Activated CD8-positive, alpha-beta T cell treated with anti-CD3 and anti-CD28 coated beads for 36 hours (primary cell): ENCODE measurements at regions of chr1 and their contacts with region 1.

Region 1: DNA sequence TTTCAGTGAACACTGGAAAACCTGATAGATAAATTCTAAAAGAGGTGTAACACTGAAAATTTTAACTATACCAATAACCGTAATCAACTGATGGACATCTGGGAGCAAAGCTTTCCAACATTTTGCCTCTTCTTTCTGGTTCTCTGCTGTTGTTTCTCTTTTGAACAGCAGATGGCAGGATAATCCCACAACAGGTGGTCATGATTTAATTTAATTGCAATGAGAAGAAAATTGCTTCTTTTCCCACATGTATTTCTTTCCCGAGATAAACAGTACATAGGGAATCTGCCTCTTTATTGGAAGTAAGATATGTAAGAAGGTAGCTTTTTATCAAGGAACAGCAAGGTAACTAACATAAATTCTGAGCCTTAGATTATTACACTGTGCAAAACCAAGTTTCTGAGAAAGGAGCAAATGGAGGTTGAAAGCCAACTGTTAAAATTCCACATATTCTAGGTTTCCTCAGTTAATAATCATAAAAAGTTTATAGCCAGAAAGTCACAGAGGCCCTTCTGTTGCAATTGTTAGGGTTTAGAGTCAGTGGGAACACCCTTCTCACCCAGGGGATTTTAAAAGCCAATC is 72.9 kb downstream of the RPS6KA1 start:
- DNase-seq: peak; percentile 52
- ATAC-seq: peak; percentile 71
- H3K4me3 Mint-ChIP-seq: no peak overlapping the region
- H3K27ac Mint-ChIP-seq: no peak overlapping the region
- H3K4me1 Mint-ChIP-seq: peaks cover 17% of the 10 kb centered on the region
- H3K27me3 Mint-ChIP-seq: no peaks in the 10 kb centered on the region
- CTCF ChIP-seq: peak; percentile 100

Region 2: DNA sequence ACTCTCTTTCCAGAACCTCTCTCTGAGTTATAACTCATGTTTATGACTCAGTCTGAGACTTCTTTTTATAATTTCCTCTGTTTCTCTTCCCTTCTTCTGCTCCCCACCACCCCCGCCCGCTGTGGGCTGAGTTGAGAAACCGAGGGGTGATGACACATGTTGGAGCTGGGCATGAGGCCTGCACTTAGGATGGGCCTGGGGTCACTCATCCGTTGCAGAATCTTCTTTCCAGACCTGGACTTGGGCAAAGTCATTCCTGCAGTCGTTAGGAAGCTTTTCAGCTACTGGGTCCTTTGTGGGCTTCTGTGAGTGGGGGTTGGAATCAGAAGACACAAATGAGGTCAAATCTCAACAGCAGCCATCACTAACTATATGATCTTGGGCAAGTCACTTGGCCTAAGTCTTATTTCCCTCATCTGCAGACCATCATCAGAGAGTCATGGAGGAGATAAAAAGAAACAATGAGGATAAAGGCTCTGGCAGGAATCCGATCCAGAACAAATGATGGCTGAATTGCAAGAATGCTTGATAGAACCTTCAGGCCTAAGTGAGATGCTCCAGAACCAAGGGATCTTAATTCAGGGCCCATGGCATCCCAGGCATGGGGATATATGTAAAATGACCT is 19.5 kb before region 1 on chr1:
- CTCF ChIA-PET with region 1: interaction called, 35 read pairs
- POLR2A ChIA-PET with region 1: no interaction called
- intact Hi-C with region 1: no loop called
- DNase-seq: peak; percentile 94
- ATAC-seq: peak; percentile 55
- H3K4me3 Mint-ChIP-seq: peak overlapping the region; percentile 9
- H3K27ac Mint-ChIP-seq: peak overlapping the region; percentile 97
- H3K4me1 Mint-ChIP-seq: peaks cover 56% of the 10 kb centered on the region
- H3K27me3 Mint-ChIP-seq: no peaks in the 10 kb centered on the region
- CTCF ChIP-seq: no peak

Region 3: GRCh38 chr1:26705788-26706311 is 103.4 kb after region 1 on chr1:
- CTCF ChIA-PET with region 1: interaction called, 36 read pairs
- POLR2A ChIA-PET with region 1: no interaction called
- intact Hi-C with region 1: no loop called
- DNase-seq: no peak
- ATAC-seq: no peak
- H3K4me3 Mint-ChIP-seq: peak overlapping the region; percentile 62
- H3K27ac Mint-ChIP-seq: peak overlapping the region; percentile 85
- H3K4me1 Mint-ChIP-seq: peaks cover 38% of the 10 kb centered on the region
- H3K27me3 Mint-ChIP-seq: no peaks in the 10 kb centered on the region
- CTCF ChIP-seq: no peak

Region 4: DNA sequence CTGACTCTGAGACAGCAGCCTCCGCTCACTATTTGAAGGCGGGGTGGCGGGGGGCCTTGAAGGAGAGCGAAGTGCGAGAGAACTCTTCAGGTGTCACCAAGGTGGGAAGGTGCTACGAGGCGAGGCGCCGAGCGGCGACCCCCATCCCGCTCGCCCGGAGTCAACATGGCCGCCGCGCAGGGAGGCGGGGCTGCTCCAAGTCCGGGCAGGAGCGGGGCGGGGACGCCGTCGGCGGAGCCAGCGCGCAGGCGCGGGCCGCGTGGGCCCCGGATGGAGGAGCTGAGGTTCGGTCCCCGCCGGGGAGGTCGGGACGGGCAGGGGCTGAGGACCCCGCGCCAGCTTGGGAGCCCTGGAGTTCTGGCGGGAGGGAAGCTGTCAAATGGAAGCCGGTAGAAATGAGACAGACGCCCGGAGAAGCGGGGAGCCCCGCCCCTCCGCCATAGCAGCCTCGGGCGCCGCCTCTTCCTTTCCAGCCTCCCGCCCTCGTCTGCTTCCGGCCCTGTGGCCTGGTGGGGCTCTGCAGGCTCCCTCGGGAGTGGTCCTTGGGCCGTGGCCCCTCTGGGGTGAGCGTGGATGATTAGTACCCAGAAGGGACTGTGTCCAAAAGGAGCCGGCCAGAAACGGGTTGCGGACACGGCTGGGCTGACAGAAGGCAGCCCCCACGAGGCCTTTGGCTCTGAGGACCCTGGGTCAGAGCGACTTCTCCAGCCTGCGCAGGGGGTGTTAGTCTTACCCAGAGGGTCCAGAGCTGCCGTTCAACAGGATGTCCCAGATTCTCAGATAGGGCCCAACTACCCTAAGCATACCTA is 185.4 kb after region 1 on chr1 and contains the start of gene PIGV:
- CTCF ChIA-PET with region 1: interaction called, 204 read pairs
- POLR2A ChIA-PET with region 1: interaction called, 21 read pairs
- intact Hi-C with region 1: loop called (anchors 1 kb)
- DNase-seq: peak; percentile 91
- ATAC-seq: peak; percentile 50
- H3K4me3 Mint-ChIP-seq: peak within 1 kb of the TSS; percentile 97
- H3K27ac Mint-ChIP-seq: peak within 1 kb of the TSS; percentile 99
- H3K4me1 Mint-ChIP-seq: peaks cover 78% of the 10 kb centered on the region
- H3K27me3 Mint-ChIP-seq: no peaks in the 10 kb centered on the region
- CTCF ChIP-seq: no peak
- total RNA-seq, gene PIGV: 21.2 to 23.9 TPM

Region 5: DNA sequence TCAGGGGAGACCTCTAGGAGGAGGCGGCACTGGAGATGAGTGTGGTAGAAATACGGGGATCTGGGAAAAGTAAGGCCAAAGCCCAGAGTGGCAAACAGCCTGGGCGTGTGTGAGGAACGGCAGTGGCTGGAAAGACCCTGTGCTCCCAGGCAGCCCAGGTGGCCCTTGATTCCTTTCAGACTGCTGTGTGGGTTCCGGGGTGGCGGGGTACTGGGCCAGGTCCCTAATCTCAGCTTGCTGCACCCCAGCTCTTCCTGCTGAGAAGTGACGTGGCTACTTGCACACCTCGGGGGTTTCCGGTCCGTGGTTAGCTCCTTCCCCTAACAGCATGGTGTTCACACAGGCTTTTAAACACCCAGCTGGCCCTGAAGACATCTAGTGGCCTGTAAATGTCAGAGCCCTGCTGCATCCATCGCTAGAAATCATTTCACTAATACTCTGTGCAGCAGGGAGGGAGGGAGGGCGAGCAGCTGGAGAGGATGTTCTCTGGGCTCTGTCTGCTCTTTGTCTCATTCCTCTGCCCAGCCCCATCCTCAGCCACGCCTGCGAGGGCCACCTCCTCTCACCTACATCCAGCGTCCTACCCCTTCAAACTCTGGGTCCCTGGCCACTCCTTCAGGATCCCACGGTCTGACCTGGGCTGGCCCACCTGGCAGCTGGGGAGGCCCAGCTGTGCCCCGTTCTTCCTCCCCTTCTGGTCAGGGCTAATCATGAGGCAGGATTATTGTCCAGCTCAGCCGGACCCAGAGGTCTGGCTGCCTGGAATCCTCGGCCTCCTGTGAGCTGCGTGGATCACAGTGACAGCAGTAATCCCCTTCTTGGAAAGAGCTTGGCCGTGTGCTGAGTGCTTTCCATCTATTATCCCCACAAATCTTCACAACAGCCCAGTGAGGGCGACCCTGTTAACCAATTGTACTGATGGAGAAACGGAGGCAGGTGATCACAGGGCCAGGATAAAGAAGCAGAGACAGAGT is 231.2 kb after region 1 on chr1:
- CTCF ChIA-PET with region 1: interaction called, 18 read pairs
- POLR2A ChIA-PET with region 1: interaction called, 3 read pairs
- intact Hi-C with region 1: no loop called
- DNase-seq: peak; percentile 95
- ATAC-seq: peak; percentile 94
- H3K4me3 Mint-ChIP-seq: peak overlapping the region; percentile 62
- H3K27ac Mint-ChIP-seq: peak overlapping the region; percentile 98
- H3K4me1 Mint-ChIP-seq: peaks cover 67% of the 10 kb centered on the region
- H3K27me3 Mint-ChIP-seq: no peaks in the 10 kb centered on the region
- CTCF ChIP-seq: no peak

Region 6: DNA sequence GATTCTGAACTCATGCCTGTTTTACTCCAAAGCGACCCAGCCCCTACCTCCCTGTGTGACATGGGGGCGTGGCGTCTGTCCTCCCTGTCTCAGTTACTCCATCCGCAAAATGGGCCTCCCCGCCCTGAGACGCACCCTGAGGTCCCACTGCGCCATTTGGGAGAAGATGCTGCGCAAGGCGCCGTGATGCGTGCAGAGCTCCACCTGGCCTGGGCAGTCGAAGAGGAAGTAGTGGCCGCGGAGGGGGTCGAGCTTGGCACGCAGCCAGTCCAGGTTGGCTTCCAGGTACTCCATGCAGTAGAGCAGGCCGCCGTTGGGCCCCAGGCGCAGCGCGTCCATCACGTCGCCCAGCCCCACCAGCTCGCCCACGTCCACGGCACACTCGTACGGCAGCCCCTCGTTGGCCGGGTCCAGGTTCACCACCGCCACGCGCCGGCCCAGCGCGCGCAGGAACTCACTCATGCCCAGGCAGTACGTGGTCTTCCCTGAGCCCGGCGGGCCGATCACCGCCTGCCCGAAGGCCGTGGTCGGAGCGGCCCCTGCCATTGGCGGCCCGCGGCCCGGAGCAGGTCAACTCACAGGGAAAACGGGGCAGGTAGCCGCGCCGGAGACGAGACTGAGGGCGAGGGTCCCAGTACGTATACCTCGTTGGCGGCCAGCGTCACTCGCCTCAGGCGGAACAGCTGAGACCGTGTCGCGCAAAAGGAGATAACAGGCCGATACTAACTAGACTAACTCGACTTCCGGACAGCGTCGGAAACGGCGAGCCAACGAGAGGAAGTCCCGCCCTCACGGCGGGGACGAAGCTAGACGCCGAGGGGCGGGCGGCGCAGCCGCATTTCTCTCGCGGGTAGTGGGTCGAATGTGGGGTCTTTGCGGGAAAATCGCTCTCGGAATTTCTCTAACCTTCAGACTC is 287.3 kb after region 1 on chr1 and contains the start of gene GPN2:
- CTCF ChIA-PET with region 1: interaction called, 10 read pairs
- POLR2A ChIA-PET with region 1: no interaction called
- intact Hi-C with region 1: no loop called
- DNase-seq: peak; percentile 85
- ATAC-seq: peak; percentile 97
- H3K4me3 Mint-ChIP-seq: peak within 1 kb of the TSS; percentile 97
- H3K27ac Mint-ChIP-seq: peak within 1 kb of the TSS; percentile 94
- H3K4me1 Mint-ChIP-seq: peaks cover 29% of the 10 kb centered on the region
- H3K27me3 Mint-ChIP-seq: no peaks in the 10 kb centered on the region
- CTCF ChIP-seq: no peak
- total RNA-seq, gene GPN2: 45.9 to 47.9 TPM